PC-3 (cell line): ENCODE measurements at regions of chr5 and their contacts with region 1.

Region 1: GRCh38 chr5:8676695-8677094 is 807.7 kb downstream of the MTRR start:
- DNase-seq: peak; percentile 37
- ATAC-seq: no peak
- H3K4me3 ChIP-seq: no peak overlapping the region
- H3K27ac ChIP-seq: no peak overlapping the region
- H3K4me1 ChIP-seq: no peaks in the 10 kb centered on the region
- H3K27me3 ChIP-seq: no peaks in the 10 kb centered on the region
- CTCF ChIP-seq: no peak

Region 2: DNA sequence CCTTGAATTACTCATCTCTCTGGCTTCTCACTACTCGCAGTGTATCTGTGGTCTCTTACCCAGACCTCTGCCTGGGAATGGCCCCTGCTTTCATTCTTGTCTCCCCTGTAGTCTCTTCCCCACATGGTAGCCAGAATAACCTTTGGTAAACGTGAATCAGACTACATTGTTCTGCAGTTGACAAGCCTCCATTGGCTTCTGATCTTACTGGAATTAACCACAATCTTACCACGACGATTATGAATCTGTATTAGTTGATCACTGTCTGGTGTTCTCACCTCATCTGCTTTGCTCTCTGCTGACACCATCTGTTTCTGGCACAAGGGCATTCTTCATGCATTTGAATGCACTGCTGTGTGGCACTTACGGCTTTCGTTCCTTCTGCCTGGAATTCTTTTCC is 26.5 kb before region 1 on chr5:
- CTCF ChIA-PET with region 1: no interaction called
- POLR2A ChIA-PET with region 1: no interaction called
- intact Hi-C with region 1: loop called (anchors 1 kb)
- DNase-seq: peak; percentile 19
- ATAC-seq: no peak
- H3K4me3 ChIP-seq: no peak overlapping the region
- H3K27ac ChIP-seq: no peak overlapping the region
- H3K4me1 ChIP-seq: no peaks in the 10 kb centered on the region
- H3K27me3 ChIP-seq: no peaks in the 10 kb centered on the region
- CTCF ChIP-seq: peak; percentile 37